ENCODE measurements at regions of chr16 and their contacts with region 1.

Region 1: GRCh38 chr16:9134739-9135138 is 43.3 kb downstream of the HAPSTR1 start:
- DNase-seq: peak; percentile 53 to 78
- H3K4me3 ChIP-seq: no peak overlapping the region
- H3K27ac ChIP-seq: no peak overlapping the region
- H3K4me1 ChIP-seq: no peaks in the 10 kb centered on the region
- H3K27me3 ChIP-seq: no peaks in the 10 kb centered on the region
- CTCF ChIP-seq: peak; percentile 78

Region 2: GRCh38 chr16:8567750-8568617 is 566.8 kb before region 1 on chr16:
- CTCF ChIA-PET with region 1: interaction called, 4 read pairs
- POLR2A ChIA-PET with region 1: no interaction called
- intact Hi-C with region 1: loop called (anchors 2 kb)
- DNase-seq: peak; percentile 77
- H3K4me3 ChIP-seq: no peak overlapping the region
- H3K27ac ChIP-seq: no peak overlapping the region
- H3K4me1 ChIP-seq: no peaks in the 10 kb centered on the region
- H3K27me3 ChIP-seq: peaks cover 9% of the 10 kb centered on the region; the same call in 1 of the 2 replicates
- CTCF ChIP-seq: peak; percentile 96

Region 3: GRCh38 chr16:8660841-8661301 is 473.9 kb before region 1 on chr16:
- CTCF ChIA-PET with region 1: interaction called, 3 read pairs
- POLR2A ChIA-PET with region 1: no interaction called
- intact Hi-C with region 1: loop called (anchors 2 kb)
- DNase-seq: peak; percentile 46 to 55
- H3K4me3 ChIP-seq: no peak overlapping the region
- H3K27ac ChIP-seq: no peak overlapping the region
- H3K4me1 ChIP-seq: no peaks in the 10 kb centered on the region
- H3K27me3 ChIP-seq: no peaks in the 10 kb centered on the region
- CTCF ChIP-seq: peak; percentile 69

Region 4: DNA sequence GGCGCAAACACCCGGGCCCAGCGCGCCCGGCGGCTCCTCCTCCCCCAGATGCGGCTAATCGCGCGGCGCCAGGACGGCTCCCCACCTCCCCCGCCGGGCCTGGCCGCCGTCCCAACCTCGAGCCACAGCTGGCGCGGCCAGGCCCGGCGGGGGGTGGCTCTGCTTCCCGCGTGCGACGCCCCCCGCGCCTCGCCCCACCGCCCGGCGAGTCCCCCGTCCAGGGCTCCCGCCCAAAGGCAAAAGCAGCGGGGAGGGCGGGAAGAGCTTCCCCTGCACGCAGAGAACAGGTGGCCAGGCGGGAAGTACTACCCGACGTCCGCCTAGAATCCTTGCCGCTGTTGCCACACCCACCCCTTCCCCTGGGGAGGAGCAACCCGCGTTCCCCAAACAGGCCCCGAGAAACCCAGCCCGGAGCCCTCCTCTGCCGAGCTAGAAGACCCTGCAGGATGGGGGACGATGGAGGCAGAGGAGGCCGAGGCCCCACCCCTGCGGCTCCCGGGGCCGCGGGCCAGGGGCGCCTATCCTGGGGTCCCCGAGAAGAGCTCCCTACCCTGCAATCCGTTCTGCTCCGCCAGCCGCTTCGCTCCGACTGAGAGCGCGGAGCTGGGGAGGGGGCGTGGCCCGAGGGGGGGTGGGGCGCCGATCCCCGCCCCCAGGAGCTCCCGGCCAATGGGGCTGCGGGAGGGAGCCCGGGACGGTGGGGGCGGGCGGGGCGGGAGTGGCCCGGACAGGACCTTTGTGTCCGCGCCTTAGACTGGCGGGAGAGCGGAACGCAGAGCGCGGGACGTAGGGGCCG is 266.1 kb before region 1 on chr16 and contains the start of gene CARHSP1:
- CTCF ChIA-PET with region 1: interaction called, 14 read pairs
- POLR2A ChIA-PET with region 1: no interaction called
- intact Hi-C with region 1: no loop called
- DNase-seq: peak; percentile 83 to 90
- H3K4me3 ChIP-seq: peak within 1 kb of the TSS; percentile 88
- H3K27ac ChIP-seq: peak within 1 kb of the TSS; percentile 55
- H3K4me1 ChIP-seq: peaks cover 41% of the 10 kb centered on the region
- H3K27me3 ChIP-seq: no peaks in the 10 kb centered on the region
- CTCF ChIP-seq: no peak
- total RNA-seq, gene CARHSP1: 179 and 186 TPM in 2 replicates

Region 5: DNA sequence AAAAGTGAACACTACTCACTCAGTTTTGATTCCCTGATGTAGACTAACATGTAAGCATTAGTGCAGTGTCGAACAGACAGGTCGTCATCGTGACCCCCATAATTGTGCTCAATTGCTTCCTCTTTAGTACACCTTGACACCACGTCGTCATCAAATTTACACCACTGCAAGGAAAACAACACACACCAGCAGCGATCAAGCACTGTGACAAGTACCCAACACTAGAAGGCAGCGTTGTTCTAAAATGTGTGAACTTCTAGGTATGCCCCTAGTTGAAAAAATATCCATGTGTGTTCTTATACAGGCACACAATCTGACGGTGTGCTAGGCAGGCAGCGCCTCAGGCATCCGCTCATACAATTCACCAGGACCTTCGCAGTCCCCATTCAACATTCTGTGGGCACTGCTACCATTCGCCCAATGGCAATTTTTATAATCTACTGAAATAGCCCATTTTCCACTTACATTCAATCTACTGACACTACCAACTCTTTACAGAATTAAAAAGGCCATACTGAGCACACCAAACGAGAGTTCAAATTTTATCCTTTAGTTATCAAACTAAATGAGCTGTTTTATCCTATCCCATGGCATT is 229.5 kb before region 1 on chr16:
- CTCF ChIA-PET with region 1: no interaction called
- POLR2A ChIA-PET with region 1: no interaction called
- intact Hi-C with region 1: loop called (anchors 1 kb)
- DNase-seq: peak; percentile 17 to 48
- H3K4me3 ChIP-seq: no peak overlapping the region
- H3K27ac ChIP-seq: no peak overlapping the region
- H3K4me1 ChIP-seq: peaks cover 15% of the 10 kb centered on the region
- H3K27me3 ChIP-seq: no peaks in the 10 kb centered on the region
- CTCF ChIP-seq: peak; percentile 59

Measured in PC-9 (cell line).